ENCODE measurements at regions of chr10 and their contacts with region 1.

Region 1: DNA sequence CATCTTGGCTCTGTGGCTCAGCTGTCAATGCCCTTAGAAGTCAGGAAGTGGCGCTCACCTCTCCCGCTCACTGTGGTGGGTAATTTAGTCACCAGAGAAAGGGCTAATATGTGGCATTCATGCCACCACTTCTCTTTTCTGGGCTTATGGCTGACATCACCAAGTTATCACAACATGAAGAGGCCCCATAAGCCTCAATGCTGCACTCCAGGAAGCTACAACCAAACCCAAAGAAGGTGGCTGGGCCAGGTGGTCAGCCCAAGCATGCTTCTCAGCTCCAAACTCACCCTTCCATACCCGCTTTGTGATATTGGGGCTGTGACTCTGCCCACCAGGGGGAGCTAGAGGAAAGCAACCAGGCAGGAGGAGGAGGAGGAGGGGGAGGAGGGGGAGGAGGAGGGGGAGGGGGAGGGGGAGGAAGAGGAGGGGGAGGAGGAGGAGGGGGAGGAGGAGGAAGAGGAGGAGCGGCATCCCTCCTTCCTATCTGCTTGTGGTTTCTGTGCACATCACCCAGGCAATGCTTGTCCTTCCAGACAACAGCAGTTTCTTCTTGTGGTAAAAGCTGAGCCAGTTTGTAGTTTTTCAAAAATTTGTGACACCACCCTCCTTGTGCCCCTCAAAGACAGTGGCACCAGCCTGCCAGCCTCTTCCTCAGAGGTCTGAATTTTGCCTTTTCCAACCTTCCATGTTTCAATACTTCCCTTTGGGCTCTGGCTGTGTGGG is 42.1 kb downstream of the CYP26A1 start:
- DNase-seq: peak; percentile 38
- H3K4me3 ChIP-seq: no peak overlapping the region
- H3K27ac ChIP-seq: no peak overlapping the region
- H3K4me1 ChIP-seq: no peaks in the 10 kb centered on the region
- H3K27me3 ChIP-seq: peaks cover 8 to 13% of the 10 kb centered on the region in 2 experiments
- CTCF ChIP-seq: peak; percentile 21 to 60
- POLR2A ChIP-seq: no peak

Region 2: GRCh38 chr10:93138113-93138870 is 22.5 kb after region 1 on chr10:
- CTCF ChIA-PET with region 1: interaction called, 12 read pairs
- POLR2A ChIA-PET with region 1: no interaction called
- dilution Hi-C with region 1: no loop called
- intact Hi-C with region 1: no loop called
- DNase-seq: no peak
- H3K4me3 ChIP-seq: no peak overlapping the region
- H3K27ac ChIP-seq: no peak overlapping the region
- H3K4me1 ChIP-seq: no peaks in the 10 kb centered on the region
- H3K27me3 ChIP-seq: peaks cover 7 to 9% of the 10 kb centered on the region in 2 experiments
- CTCF ChIP-seq: no peak
- POLR2A ChIP-seq: no peak

Measured in endothelial cell of umbilical vein (primary cell).